ENCODE measurements at regions of chr16 and their contacts with region 1.

Region 1: DNA sequence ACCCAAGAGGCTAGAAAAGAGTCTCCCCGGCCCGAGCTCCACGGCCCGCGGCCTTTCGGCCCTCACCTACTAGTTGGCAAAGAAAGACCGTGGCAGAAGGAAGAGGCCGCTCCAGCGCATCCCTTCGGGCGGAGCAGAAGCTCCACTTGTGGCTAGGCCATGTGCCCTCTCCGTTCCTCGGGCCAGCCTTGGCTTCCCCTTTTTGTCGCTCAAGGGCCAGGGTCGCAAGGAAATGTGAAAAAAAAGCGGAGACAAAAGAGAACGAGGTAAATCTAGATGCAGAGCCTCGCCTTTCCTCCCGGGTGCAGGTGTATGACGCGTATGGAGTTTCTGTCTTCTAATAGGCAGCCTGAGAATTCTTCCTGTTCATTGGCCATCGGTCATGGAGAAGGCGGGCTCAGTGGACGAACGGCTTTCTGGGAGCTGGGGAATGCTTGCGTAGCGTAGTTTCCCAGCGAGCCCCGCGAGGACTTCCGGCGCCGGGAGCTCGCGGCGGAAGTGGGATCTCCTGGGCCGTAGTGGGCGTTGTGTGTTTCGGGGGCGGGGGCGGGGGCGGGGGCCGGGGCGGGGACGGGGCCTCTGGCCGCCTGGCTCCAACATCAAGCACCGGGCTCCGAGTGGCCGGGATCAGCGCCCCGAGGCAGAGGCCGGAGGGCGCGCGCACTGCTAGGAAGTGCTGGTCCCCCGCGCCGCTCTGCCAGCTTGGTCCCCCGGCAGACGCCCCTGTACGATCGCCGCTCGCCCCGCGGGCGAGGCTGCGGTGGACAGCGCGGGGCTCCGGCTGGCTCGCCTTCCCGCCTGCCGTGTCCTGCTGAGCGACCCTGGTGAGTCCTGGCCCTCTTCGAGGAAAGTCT is at the start of gene ZNF213:
- DNase-seq: peak; percentile 98
- H3K4me3 ChIP-seq: peak within 1 kb of the TSS; percentile 77 to 99 (median 98)
- H3K27ac ChIP-seq: peak within 1 kb of the TSS; percentile 91
- H3K4me1 ChIP-seq: peaks cover 10% of the 10 kb centered on the region
- H3K27me3 ChIP-seq: no peaks in the 10 kb centered on the region
- CTCF ChIP-seq: no peak
- POLR2A ChIP-seq: peak; percentile 85
- total RNA-seq, gene ZNF213: 8.0 and 9.8 TPM in 2 replicates

Region 2: GRCh38 chr16:2142942-2143877 is 991.6 kb before region 1 on chr16:
- CTCF ChIA-PET with region 1: no interaction called
- POLR2A ChIA-PET with region 1: no interaction called
- dilution Hi-C with region 1: no loop called
- intact Hi-C with region 1: no loop called
- DNase-seq: no peak
- H3K4me3 ChIP-seq: no peak overlapping the region
- H3K27ac ChIP-seq: no peak overlapping the region
- H3K4me1 ChIP-seq: peaks cover 2% of the 10 kb centered on the region
- H3K27me3 ChIP-seq: no peaks in the 10 kb centered on the region
- CTCF ChIP-seq: no peak
- POLR2A ChIP-seq: no peak

Region 3: DNA sequence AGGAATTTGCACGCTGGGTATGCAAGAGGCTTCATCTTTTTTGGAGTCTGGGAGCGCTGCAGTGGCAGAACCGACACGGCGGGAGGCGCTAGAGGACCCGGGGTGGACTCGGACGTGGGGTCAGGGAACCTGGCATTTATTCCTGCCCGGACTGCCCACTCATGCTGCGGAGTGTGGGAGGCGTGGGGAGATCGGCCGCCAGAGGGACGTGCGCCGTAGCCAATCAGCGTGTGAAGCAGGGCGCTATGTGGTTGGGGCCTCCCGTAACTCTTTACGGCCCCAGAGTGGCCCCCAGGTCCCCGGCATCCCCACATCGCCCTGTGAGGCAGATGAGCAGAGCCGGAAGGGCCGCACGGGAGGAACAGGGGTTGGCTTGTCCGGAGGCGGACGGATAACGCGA is 240.6 kb before region 1 on chr16:
- CTCF ChIA-PET with region 1: no interaction called
- POLR2A ChIA-PET with region 1: no interaction called
- dilution Hi-C with region 1: no loop called
- intact Hi-C with region 1: no loop called
- DNase-seq: no peak
- H3K4me3 ChIP-seq: no peak overlapping the region
- H3K27ac ChIP-seq: no peak overlapping the region
- H3K4me1 ChIP-seq: peaks cover 5% of the 10 kb centered on the region
- H3K27me3 ChIP-seq: no peaks in the 10 kb centered on the region
- CTCF ChIP-seq: no peak
- POLR2A ChIP-seq: no peak

Region 4: GRCh38 chr16:3029537-3030402 is 105.0 kb before region 1 on chr16:
- CTCF ChIA-PET with region 1: interaction called, 138 read pairs
- POLR2A ChIA-PET with region 1: interaction called, 3 read pairs
- dilution Hi-C with region 1: no loop called
- intact Hi-C with region 1: no loop called
- DNase-seq: no peak
- H3K4me3 ChIP-seq: no peak overlapping the region
- H3K27ac ChIP-seq: no peak overlapping the region
- H3K4me1 ChIP-seq: no peaks in the 10 kb centered on the region
- H3K27me3 ChIP-seq: peaks cover 36 to 41% of the 10 kb centered on the region in 2 experiments
- CTCF ChIP-seq: no peak
- POLR2A ChIP-seq: no peak

Region 5: GRCh38 chr16:3099732-3100499 is 34.9 kb before region 1 on chr16:
- CTCF ChIA-PET with region 1: interaction called, 49 read pairs
- POLR2A ChIA-PET with region 1: interaction called, 3 read pairs
- dilution Hi-C with region 1: no loop called
- intact Hi-C with region 1: loop called (anchors 1 kb)
- DNase-seq: peak; percentile 81
- H3K4me3 ChIP-seq: no peak overlapping the region
- H3K27ac ChIP-seq: no peak overlapping the region
- H3K4me1 ChIP-seq: peaks cover 26% of the 10 kb centered on the region
- H3K27me3 ChIP-seq: peaks cover 0 to 2% of the 10 kb centered on the region in 2 experiments
- CTCF ChIP-seq: no peak
- POLR2A ChIP-seq: no peak

Region 6: DNA sequence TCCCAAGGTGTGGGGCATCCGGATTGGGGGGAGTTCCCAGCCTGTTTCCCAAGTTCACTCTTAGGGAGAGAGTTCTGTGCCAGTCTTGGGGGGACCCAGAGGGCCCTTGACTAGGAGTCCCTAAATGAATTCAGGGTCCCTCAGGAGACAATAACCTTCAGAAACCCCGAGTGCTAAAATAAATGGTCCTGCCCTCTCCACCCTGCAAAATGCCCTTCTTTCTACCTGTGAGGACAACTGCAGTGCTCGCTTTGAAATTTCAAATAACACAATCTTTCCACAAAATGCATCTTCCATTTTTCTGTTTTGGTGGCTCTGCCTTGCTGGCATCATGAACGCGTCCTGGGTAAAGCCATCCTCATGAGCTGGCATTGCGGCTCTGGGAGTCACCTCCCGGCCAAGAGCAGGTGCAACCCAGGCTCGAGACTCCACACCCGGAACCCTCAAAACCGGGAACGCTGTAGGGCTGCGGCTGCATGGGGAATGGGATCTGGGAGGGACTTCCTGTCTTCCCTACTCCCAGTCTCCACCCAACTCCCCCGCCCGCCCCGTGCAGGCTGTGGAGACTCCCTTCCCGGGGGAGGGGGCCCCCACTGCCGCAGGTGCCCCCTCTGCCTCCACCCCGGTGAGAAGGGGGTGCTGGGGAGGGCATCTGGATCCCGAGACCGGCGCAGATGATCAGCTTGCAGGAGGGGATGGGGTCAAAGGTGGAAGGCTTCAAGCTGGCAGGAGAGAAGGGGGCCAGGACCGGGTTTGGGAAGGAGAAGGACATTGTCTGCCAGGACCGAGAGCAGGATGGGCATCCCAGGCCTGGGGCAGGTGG is 22.5 kb before region 1 on chr16 and contains the start of gene ZNF205:
- CTCF ChIA-PET with region 1: interaction called, 23 read pairs
- POLR2A ChIA-PET with region 1: interaction called, 3 read pairs
- dilution Hi-C with region 1: no loop called
- intact Hi-C with region 1: no loop called
- DNase-seq: peak; percentile 61
- H3K4me3 ChIP-seq: peak within 1 kb of the TSS; percentile 44 to 78 (median 59)
- H3K27ac ChIP-seq: no peak within 1 kb of the TSS
- H3K4me1 ChIP-seq: peaks cover 18% of the 10 kb centered on the region
- H3K27me3 ChIP-seq: no peaks in the 10 kb centered on the region
- CTCF ChIP-seq: no peak
- POLR2A ChIP-seq: peak; percentile 34
- total RNA-seq, gene ZNF205: 15.5 and 18.5 TPM in 2 replicates

Region 7: DNA sequence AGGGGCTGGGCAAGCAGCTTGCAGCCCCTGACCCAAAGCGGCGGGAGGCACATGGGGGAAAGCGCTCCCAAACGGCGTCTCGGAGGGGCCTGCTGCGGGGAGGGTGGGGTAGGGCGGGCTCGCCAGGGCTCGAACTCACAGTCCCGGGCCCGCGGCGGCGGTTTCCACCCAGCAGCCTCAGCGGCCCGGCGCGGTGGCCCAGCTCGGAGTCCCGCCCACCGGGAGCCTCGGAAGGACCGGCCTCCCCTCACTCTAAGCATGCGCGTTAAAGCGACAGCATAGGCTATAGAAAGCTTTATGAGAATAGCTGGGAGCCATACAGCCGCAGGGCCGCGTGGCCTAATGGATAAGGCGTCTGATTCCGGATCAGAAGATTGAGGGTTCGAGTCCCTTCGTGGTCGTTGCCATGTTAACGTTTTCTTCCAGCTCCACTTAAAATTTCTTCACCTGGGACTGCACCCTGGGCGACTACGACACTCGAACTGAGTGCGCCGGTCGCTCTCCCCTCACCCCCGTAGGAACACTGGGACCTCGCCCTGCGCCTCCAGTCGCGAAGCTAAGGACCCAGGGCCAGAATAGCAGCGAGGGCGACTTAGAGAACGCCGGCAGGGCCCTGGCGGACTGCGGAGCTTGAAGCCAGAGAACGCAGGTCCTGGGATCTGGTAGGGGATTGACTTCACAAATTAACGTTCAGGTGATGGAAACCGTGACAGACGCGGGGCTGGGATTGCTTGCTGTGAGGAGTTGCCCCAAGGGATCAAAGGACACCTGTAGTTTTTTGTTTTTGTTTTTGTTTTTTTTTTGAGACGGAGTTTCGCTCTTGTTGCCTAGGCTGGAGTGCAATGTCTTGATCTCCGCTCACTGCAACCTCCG is 15.8 kb after region 1 on chr16:
- CTCF ChIA-PET with region 1: interaction called, 54 read pairs
- POLR2A ChIA-PET with region 1: interaction called, 9 read pairs
- dilution Hi-C with region 1: no loop called
- intact Hi-C with region 1: loop called (anchors 1 kb)
- DNase-seq: peak; percentile 98
- H3K4me3 ChIP-seq: peak overlapping the region; percentile 68 to 80 (median 69)
- H3K27ac ChIP-seq: peak overlapping the region; percentile 37
- H3K4me1 ChIP-seq: peaks cover 10% of the 10 kb centered on the region
- H3K27me3 ChIP-seq: no peaks in the 10 kb centered on the region
- CTCF ChIP-seq: no peak
- POLR2A ChIP-seq: peak; percentile 33

Region 8: DNA sequence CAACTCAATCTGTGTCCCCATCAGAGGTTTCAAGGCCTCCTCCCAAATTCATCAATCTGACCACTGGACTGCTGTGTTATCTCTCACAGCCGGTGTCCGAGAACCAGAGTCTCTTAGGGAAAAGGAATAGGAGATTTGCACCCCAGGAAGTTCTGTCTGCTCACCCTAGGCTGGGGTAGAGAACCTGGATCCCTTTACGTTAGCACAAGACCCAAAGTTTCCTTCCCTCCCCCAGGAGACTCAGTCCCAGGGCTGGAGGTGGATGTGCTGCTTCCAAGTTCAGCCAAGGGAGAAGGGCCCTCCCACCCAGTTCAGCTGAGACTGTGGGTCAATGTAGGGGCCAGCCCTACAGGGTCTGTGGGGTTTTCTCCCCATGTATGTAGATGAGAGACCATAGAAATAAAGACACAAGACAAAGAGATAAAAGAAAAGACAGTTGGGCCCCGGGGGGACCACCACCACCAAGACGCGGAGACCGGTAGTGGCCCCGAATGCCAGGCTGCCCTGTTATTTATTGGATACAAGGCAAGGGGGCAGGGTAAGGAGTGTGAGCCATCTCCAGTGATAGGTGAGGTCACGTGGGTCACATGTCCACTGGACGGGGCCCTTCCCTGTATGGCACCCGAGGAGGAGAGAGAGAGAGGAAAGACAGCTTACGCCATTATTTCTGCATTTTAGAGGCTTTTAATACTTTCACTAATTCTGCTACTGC is 30.5 kb after region 1 on chr16:
- CTCF ChIA-PET with region 1: interaction called, 9 read pairs
- POLR2A ChIA-PET with region 1: interaction called, 3 read pairs
- dilution Hi-C with region 1: no loop called
- intact Hi-C with region 1: loop called (anchors 1 kb)
- DNase-seq: no peak
- H3K4me3 ChIP-seq: no peak overlapping the region
- H3K27ac ChIP-seq: no peak overlapping the region
- H3K4me1 ChIP-seq: peaks cover under 1% of the 10 kb centered on the region
- H3K27me3 ChIP-seq: peaks cover 15 to 16% of the 10 kb centered on the region in 2 experiments
- CTCF ChIP-seq: no peak
- POLR2A ChIP-seq: no peak

Measured in endothelial cell of umbilical vein (primary cell).